Activated B cell treated with CpG ODN at 0.5 μM for 24 hours (primary cell): ENCODE measurements at regions of chr9 and their contacts with region 1.

Region 1: DNA sequence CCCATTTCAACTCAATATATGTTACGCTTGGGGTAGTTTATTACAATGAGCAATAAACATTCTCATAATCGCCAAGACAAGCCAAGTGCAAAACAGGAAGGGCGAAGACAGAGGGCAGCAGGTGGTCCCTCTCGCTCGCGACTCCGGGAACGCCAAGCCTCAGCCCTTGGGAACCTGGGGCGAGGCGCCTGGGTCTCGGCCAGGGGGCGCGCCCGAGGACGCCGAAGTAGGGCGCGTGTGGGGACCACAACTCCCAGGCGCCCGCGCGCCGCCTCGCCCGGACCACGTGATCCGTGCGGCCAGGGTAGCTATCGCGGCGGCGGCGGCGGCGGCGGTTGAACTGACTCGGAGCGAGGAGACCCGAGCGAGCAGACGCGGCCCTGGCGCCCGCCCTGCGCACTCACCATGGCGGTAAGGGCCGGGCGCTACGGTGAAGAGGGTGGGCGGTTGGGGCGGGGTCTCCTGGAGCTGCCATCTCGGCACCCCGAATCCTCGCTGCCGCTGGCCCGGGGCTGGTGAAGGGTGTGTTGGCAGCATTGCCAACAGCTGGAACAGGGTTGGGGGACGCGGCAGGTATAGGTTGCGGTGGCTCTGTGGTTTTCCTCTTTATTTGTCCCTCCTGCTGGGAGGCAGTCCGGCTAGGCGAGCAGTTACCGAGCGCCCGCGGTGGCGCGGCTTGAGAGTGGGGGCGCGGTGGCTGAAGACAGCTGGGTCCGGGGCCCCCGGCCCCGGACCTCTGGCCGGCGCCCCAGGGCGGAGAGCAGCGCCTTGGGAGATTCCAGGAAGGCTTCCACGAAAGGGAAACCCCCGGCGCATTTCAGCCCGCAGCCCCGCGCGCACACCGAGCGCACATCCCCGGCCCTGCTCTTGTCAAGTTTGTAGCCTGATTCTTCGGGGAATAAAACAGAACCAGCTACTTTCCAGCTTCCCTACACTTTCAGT is at the start of gene SLC31A2:
- DNase-seq: peak; percentile 80
- ATAC-seq: peak; percentile 94
- H3K4me3 Mint-ChIP-seq: peak within 1 kb of the TSS; percentile 84
- H3K27ac Mint-ChIP-seq: no peak within 1 kb of the TSS
- H3K4me1 Mint-ChIP-seq: peaks cover 13% of the 10 kb centered on the region
- H3K27me3 Mint-ChIP-seq: peaks cover 2% of the 10 kb centered on the region
- CTCF ChIP-seq: no peak
- total RNA-seq, gene SLC31A2: 0.93 and 1.1 TPM in 2 replicates

Region 2: DNA sequence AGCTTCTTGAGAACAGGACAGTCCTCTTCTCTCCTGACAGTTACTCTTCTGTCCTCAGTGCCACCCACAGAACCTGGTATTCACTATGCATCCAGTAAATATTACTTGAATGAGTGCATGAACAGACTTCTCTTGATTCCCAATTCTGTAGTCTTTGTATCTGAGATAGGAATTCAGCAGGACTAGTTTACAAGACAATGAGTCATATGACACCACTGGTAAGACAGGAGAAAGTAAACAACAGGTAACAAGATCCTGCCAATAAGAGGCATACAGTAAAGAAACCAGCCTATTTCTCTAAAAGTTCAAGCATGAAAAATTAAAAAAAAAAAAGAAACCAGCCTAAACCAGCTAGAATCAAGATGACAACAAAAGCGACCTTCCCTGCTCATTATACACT is 145.2 kb before region 1 on chr9:
- CTCF ChIA-PET with region 1: no interaction called
- POLR2A ChIA-PET with region 1: no interaction called
- intact Hi-C with region 1: no loop called
- DNase-seq: no peak
- ATAC-seq: no peak
- H3K4me3 Mint-ChIP-seq: no peak overlapping the region
- H3K27ac Mint-ChIP-seq: no peak overlapping the region
- H3K4me1 Mint-ChIP-seq: no peaks in the 10 kb centered on the region
- H3K27me3 Mint-ChIP-seq: peaks cover 1% of the 10 kb centered on the region
- CTCF ChIP-seq: no peak

Region 3: GRCh38 chr9:113164536-113165300 is 13.8 kb after region 1 on chr9:
- CTCF ChIA-PET with region 1: no interaction called
- POLR2A ChIA-PET with region 1: no interaction called
- intact Hi-C with region 1: no loop called
- DNase-seq: no peak
- ATAC-seq: no peak
- H3K4me3 Mint-ChIP-seq: no peak overlapping the region
- H3K27ac Mint-ChIP-seq: no peak overlapping the region
- H3K4me1 Mint-ChIP-seq: no peaks in the 10 kb centered on the region
- H3K27me3 Mint-ChIP-seq: no peaks in the 10 kb centered on the region
- CTCF ChIP-seq: no peak

Region 4: DNA sequence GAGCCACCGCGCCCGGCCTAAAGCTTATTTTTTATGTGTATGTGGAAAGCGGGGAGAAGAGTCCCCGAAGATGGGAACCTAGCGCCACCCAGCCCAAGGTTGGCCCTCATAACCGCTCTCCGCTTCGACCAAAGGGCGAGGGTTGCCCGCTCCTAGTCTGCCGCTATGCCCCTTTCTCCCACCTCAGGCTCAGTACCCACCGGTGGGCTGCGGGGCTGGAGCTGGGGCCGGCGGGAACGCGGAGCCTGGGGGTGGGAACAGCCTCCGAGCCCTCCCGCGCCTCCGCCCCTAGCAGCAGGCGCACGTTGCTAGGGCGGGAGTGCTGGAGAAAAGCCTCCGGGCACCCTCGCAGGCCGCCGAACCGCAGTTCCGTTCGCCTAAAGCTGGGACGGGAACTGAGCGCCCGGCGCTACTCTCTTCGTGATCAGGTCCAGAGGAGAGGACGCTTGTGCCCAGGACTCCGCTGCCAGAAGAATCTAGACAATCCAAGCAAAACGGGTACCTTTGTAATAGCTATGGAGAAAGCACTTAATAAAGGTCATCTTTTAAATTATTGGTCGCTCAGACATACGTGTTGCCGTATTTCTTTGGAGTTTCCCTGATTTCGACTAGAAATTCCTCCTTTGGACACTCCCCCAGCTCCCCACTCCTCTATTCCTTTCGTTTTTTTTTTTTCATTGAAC is 189.2 kb after region 1 on chr9 and contains the start of gene WDR31:
- CTCF ChIA-PET with region 1: no interaction called
- POLR2A ChIA-PET with region 1: no interaction called
- intact Hi-C with region 1: loop called (anchors 5 kb)
- DNase-seq: peak; percentile 78
- ATAC-seq: peak; percentile 98
- H3K4me3 Mint-ChIP-seq: peak within 1 kb of the TSS; percentile 84
- H3K27ac Mint-ChIP-seq: peak within 1 kb of the TSS; percentile 74
- H3K4me1 Mint-ChIP-seq: peaks cover 11% of the 10 kb centered on the region
- H3K27me3 Mint-ChIP-seq: peaks cover 3% of the 10 kb centered on the region
- CTCF ChIP-seq: no peak
- total RNA-seq, gene WDR31: 0.73 and 1.6 TPM in 2 replicates

Region 5: DNA sequence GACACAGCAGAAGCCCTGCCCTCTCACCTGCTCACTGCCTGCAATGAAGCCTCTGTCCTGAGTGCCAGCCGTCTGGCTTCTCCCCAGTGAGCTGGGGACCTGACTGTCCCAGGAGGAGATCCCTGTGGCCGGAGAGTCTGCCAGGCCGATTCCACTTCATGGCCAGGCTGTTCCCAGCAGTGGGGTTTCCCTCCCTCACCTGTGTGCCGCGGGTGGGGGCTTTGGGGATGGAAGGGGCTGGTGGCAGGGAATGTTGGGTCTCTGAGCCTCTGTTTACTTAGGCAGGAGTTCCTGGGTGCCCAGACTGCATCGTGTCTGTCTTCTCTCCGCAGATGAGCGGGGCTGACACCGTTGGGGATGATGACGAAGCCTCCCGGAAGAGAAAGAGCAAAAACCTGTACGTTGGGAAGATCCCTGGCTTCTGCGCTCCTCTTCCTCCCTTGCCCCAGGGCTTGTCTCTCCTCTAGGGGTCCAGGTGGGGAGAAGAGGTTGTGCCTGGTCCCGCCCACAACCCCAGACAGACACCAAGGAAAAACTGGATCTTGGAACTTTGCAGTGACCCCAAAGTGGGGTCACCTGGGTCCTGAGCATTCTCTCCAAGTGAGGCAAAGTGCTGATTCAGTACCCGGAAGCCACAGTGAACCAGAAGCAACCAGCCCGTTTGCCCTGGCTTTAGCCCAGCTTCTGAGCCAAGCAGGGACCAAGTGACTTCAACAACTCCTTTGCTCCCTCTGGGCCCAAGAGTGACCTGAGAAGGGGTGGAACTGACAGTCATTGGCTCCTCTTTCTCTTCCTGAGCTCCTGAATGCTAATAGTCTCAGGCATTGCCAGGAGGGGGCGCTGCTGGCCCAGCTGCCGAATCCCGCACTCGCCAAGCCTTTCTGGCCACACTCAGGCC is 440.3 kb after region 1 on chr9:
- CTCF ChIA-PET with region 1: no interaction called
- POLR2A ChIA-PET with region 1: no interaction called
- intact Hi-C with region 1: no loop called
- DNase-seq: peak; percentile 67
- ATAC-seq: peak; percentile 71
- H3K4me3 Mint-ChIP-seq: no peak overlapping the region
- H3K27ac Mint-ChIP-seq: no peak overlapping the region
- H3K4me1 Mint-ChIP-seq: peaks cover 14% of the 10 kb centered on the region
- H3K27me3 Mint-ChIP-seq: no peaks in the 10 kb centered on the region
- CTCF ChIP-seq: no peak